Activated CD4-positive, alpha-beta T cell treated with anti-CD3 and anti-CD28 coated beads for 36 hours (primary cell): ENCODE measurements at regions of chr1 and their contacts with region 1.

Region 1: DNA sequence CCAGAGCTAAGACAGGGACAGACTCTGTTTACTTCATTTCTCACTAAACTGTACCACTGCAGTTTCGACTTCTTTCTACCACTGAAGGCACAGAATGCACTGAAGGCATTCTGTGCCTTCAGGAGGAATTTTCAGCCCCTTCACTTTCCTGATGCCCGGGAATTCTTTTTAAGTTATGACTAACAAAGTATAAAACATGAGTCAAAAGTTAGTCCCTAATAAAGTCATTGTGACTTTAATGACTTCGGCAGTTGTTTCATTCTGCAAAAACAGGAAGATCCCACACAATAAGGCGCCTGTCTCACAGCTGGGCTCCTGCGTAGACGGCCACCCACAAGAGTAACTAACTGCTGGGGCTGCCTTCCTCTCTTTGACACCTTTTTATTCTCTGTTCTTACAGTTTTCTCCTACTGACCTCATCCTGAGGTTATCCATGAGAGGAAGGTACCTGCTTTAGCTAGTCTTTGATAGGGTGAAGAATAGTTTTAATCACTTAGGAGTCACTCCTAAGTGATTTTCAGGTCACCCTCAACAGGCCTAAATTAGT is 183.9 kb upstream of the SGIP1 start:
- DNase-seq: peak; percentile 78
- ATAC-seq: peak; percentile 59
- H3K4me3 Mint-ChIP-seq: peak overlapping the region; percentile 57
- H3K27ac Mint-ChIP-seq: peak overlapping the region; percentile 88
- H3K4me1 Mint-ChIP-seq: peaks cover 93% of the 10 kb centered on the region
- H3K27me3 Mint-ChIP-seq: no peaks in the 10 kb centered on the region

Region 2: DNA sequence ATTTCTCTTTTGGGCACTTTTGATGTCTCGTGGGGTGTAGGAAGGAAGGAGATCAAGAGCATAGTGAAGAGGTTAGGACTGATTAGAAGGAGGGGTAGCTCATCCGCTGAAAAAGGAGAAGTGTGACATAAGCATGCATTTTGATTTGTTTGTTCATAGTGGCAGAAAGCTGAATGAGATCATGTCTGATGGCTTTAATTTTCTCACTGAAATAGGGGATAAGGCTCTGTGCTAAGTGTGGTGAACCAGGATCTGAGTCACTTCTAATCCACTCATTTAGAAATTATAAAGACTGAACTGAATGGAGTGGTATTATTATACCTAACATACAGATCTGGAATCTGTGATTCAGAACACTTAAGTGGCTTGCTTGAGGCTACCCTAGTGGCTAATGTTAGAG is 212.8 kb before region 1 on chr1:
- CTCF ChIA-PET with region 1: no interaction called
- POLR2A ChIA-PET with region 1: no interaction called
- intact Hi-C with region 1: no loop called
- DNase-seq: peak; percentile 5
- ATAC-seq: peak; percentile 96
- H3K4me3 Mint-ChIP-seq: no peak overlapping the region
- H3K27ac Mint-ChIP-seq: no peak overlapping the region
- H3K4me1 Mint-ChIP-seq: peaks cover 6% of the 10 kb centered on the region
- H3K27me3 Mint-ChIP-seq: peaks cover 5% of the 10 kb centered on the region

Region 3: DNA sequence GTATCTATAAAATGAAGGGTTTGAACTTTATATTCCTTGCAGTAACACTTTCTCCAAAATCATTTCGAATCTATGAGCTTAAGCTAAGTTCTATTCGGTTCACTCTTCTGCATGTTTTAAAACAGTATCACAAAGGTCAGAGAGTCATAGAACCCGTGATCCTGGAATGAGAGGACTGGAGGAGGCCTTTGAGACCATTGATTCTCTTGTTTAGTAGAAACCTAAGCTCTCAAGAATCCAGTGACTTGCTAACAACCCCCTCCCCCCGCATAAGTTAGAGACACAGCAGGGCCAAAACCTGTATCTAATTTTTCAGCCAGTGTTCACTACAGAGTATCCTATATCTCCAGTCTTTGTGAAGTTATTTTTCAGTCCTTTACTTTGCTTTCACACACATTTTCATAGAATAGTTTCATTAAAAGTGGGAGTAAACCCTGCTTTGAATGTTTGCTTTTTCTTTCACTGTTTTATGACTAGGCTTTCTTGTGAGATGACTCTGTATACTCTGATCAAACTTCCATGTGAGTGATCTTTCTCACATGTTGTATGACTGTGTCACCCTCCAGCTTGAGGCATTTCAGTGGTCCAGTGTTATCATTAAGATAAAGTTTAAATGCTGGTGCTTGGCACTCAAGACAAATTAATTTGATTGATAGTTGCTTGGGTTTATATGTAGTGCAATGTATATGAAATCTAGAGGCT is 91.5 kb before region 1 on chr1:
- CTCF ChIA-PET with region 1: interaction called, 24 read pairs
- POLR2A ChIA-PET with region 1: interaction called, 4 read pairs
- intact Hi-C with region 1: loop called in 1 of 2 experiments (anchors 1 kb)
- DNase-seq: no peak
- ATAC-seq: peak; percentile 91
- H3K4me3 Mint-ChIP-seq: no peak overlapping the region
- H3K27ac Mint-ChIP-seq: peak overlapping the region; percentile 68
- H3K4me1 Mint-ChIP-seq: peaks cover 90% of the 10 kb centered on the region
- H3K27me3 Mint-ChIP-seq: no peaks in the 10 kb centered on the region

Region 4: DNA sequence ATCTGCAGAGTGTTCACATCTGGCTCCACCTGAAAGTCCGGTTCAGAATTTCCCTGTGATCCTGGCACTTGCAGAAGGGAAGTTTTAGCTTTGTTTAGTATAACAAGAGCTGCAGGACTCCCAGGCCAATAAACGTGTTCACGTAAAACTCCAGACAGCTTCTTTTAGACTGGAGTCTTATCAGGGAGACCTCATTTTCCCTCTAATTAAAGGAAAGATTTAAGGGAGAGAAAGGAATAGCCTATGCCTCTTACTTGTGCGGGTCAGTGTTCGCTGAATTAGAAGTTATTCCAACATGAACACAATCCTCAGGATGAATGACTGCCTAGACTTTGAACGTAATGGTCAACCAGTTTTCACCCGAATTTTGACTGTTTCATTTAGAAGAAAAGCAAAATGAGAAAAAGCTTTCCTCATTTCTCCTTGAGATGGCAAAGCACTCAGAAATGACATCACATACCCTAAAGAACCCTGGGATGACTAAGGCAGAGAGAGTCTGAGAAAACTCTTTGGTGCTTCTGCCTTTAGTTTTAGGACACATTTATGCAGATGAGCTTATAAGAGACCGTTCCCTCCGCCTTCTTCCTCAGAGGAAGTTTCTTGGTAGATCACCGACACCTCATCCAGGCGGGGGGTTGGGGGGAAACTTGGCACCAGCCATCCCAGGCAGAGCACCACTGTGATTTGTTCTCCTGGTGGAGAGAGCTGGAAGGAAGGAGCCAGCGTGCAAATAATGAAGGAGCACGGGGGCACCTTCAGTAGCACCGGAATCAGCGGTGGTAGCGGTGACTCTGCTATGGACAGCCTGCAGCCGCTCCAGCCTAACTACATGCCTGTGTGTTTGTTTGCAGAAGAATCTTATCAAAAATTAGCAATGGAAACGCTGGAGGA is 18.2 kb before region 1 on chr1:
- CTCF ChIA-PET with region 1: interaction called, 48 read pairs
- POLR2A ChIA-PET with region 1: interaction called, 14 read pairs
- intact Hi-C with region 1: loop called (anchors 1 kb)
- DNase-seq: peak; percentile 75
- ATAC-seq: peak; percentile 40
- H3K4me3 Mint-ChIP-seq: peak overlapping the region; percentile 91
- H3K27ac Mint-ChIP-seq: peak overlapping the region; percentile 98
- H3K4me1 Mint-ChIP-seq: peaks cover 44% of the 10 kb centered on the region
- H3K27me3 Mint-ChIP-seq: no peaks in the 10 kb centered on the region

Region 5: DNA sequence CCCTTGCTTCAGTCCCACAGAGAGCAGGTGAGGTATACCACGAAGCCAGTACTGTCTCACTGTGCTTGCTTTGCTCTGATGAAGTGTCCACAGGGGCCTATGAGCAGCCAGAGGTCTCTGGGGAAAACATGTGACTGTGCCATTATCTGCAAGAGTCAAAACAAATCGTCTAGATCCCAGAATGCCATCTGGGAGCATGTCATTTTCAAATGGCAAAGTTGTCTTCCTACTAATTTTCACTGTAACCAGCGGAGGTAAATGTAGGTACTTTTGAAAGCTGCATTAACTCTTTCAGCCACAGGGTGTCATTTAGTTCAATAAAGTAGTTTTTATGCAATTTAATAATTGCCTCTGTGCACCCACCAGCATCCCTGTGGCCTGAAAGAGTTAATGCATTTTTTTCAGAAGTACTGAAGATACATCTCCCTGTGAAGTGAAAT is 10.2 kb after region 1 on chr1:
- CTCF ChIA-PET with region 1: interaction called, 30 read pairs
- POLR2A ChIA-PET with region 1: interaction called, 5 read pairs
- intact Hi-C with region 1: no loop called
- DNase-seq: no peak
- ATAC-seq: peak; percentile 51
- H3K4me3 Mint-ChIP-seq: no peak overlapping the region
- H3K27ac Mint-ChIP-seq: no peak overlapping the region
- H3K4me1 Mint-ChIP-seq: peaks cover 76% of the 10 kb centered on the region
- H3K27me3 Mint-ChIP-seq: no peaks in the 10 kb centered on the region

Region 6: DNA sequence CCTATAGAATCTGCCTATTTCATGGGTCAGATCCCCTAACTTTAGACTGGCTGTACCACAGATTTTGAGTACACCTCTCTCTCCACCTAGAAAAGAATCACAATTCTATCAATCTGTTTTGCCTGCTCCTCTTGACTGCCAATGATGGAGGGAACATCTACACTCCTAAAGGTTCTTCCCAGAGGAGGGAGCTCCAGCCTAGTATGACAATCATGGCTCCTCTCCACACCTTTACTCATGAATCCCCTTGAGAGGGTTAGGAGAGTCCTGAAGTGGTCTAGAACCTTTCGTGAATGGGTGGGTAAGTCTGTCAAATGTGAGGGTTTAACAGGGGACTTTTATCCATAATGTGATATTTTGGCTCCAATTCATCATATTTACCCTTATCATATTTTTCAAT is 526.6 kb after region 1 on chr1:
- CTCF ChIA-PET with region 1: no interaction called
- POLR2A ChIA-PET with region 1: no interaction called
- intact Hi-C with region 1: no loop called
- DNase-seq: no peak
- ATAC-seq: no peak
- H3K4me3 Mint-ChIP-seq: no peak overlapping the region
- H3K27ac Mint-ChIP-seq: no peak overlapping the region
- H3K4me1 Mint-ChIP-seq: no peaks in the 10 kb centered on the region
- H3K27me3 Mint-ChIP-seq: no peaks in the 10 kb centered on the region